ENCODE measurements at regions of chr19 and their contacts with region 1.

Region 1: DNA sequence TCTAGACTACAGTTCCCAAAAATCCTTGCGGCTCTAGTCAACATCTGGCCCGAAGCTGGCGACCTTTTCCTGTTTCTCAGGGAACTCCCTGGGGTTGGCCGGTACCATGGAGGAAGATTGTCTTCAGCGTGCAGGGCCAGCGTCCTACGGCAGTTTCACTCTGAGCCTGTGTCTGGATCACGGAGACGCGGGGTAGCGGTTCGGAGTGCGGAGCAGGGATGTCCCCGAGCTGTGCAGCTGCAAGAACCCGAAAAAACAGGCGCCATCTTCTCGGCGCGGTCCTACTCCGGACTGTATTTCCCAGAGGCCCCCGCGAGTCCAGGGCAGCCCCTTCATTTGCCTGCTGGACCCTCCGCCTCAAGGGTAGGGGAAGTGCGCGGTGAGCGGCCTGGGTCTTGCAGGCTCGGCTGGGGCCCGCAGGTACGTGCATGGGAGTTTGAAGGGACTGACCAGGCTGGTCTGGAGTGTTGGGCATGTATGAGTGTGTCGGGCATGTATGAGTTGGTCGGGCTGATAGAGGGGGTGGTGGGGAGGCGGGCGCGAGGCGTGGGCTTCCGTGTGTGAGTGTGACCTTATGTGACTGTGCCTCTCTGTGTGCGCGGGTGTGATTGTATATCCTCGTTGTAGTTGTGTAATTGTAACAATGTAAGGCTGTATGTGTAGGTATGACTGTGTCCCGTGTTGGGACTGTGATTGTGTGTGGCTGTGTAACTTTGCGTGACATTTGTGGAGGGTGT is at the start of gene ZNF383:
- DNase-seq: peak; percentile 80
- H3K4me3 Mint-ChIP-seq: peak within 1 kb of the TSS; percentile 96
- H3K27ac Mint-ChIP-seq: peak within 1 kb of the TSS; percentile 91
- H3K4me1 Mint-ChIP-seq: peaks cover 11% of the 10 kb centered on the region
- H3K27me3 Mint-ChIP-seq: no peaks in the 10 kb centered on the region
- total RNA-seq, gene ZNF383: 5.2 and 7.4 TPM in 2 replicates

Region 2: GRCh38 chr19:36528194-36528920 is 689.7 kb before region 1 on chr19 and contains the start of gene ZNF260:
- intact Hi-C with region 1: loop called (anchors 1 kb)
- DNase-seq: peak; percentile 87
- H3K4me3 Mint-ChIP-seq: peak within 1 kb of the TSS; percentile 96
- H3K27ac Mint-ChIP-seq: peak within 1 kb of the TSS; percentile 94
- H3K4me1 Mint-ChIP-seq: peaks cover 17% of the 10 kb centered on the region
- H3K27me3 Mint-ChIP-seq: no peaks in the 10 kb centered on the region
- total RNA-seq, gene ZNF260: 6.2 and 7.1 TPM in 2 replicates

Region 3: DNA sequence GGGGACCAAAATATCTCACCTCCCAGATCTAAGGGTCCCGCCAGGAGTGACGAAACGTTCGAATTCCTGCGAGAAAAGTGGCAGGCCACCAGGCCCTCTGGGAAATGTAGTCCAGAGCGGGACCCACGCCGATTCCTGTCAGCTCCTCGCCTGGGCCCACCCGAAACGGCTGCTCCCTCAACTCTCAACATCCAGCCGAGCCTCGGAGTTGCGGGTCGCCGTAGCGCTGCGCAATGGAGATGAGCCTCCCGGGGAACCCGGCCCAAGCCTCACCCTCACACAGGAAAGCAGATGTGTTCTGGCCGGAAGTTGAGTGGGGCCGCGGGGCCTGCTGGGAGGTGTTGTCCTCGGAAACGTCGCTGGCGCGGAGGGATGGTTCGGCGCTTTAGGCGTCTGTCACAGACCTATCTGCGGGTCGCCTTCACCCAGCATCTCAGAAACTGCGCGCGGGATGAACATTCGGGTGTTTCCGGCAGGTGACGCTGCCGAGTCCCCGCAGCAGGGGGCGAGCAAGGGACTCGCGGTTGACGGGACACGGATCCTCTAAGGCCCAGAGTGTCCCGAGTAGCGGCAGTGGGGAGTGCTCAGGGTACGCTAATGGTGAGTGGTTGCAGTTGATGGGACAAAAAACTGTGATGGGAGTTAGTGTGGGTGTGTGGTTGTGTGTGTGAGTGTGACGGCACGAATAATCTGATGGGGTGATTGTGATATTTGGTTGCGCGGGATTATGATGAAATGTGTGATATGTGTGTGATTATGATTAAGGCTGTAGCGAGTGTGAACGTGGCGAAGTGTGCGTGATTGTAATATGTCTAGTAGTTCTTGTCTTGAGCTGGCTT is 301.8 kb before region 1 on chr19 and contains the starts of genes ZNF568 and ZNF829:
- intact Hi-C with region 1: loop called (anchors 1 kb)
- DNase-seq: peak; percentile 92
- H3K4me3 Mint-ChIP-seq: peak within 1 kb of the TSS; percentile 90
- H3K27ac Mint-ChIP-seq: peak within 1 kb of the TSS; percentile 93
- H3K4me1 Mint-ChIP-seq: peaks cover 20% of the 10 kb centered on the region
- H3K27me3 Mint-ChIP-seq: no peaks in the 10 kb centered on the region
- total RNA-seq, gene ZNF568: 4.5 and 6.3 TPM in 2 replicates
- total RNA-seq, gene ZNF829: 3.4 and 3.5 TPM in 2 replicates

Region 4: DNA sequence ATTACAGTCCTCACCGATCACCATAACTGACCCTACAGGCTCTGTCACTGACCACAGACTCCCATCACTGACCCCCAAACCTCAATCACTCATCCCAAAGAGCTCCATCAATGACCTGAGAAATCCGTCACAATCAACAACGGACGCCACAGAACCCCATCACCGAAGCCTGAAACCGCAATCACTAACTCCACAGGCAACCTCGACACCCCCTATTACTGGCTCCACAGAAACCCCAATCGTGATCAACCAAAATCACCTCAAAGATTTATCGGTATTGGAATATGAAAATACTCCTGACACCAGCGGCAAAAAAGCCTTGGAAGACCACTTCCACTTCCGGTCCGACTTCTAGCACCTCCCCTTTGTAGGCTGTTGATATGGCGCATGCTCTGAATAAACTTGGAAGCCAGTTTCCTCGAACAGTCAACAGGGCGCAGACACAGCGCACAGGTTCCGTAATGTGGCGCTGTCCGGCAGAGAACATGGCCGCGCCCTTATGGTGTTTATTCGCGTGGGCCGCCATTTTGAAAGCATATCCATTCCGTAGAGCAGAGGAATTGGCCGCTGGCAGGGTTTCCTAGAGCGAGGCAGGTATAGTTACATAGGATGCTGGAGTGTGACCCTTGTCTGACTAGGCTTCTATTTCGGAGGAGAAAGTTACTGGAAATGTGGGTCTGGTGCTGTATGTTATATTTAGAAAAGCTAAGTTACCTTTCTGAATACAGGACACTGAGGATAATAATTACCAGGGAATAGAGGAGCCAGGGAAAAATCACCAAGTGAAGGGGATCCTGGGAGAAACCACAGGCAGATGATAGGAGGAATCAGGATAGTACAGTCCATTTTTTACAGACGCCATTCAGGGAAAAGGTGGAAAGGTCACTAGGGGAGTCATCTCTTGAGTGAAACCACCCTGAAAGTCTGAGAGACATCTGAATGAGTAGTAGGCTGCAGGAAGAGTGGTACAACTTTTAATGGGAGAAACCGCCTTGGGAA is 45.4 kb before region 1 on chr19 and contains the start of gene ZNF585A:
- intact Hi-C with region 1: loop called (anchors 1 kb)
- DNase-seq: peak; percentile 82
- H3K4me3 Mint-ChIP-seq: no peak within 1 kb of the TSS
- H3K27ac Mint-ChIP-seq: no peak within 1 kb of the TSS
- H3K4me1 Mint-ChIP-seq: no peaks in the 10 kb centered on the region
- H3K27me3 Mint-ChIP-seq: no peaks in the 10 kb centered on the region
- total RNA-seq, gene ZNF585A: 4.1 and 4.2 TPM in 2 replicates

Region 5: GRCh38 chr19:37413243-37414084 is 195.4 kb after region 1 on chr19:
- intact Hi-C with region 1: no loop called
- DNase-seq: no peak
- H3K4me3 Mint-ChIP-seq: no peak overlapping the region
- H3K27ac Mint-ChIP-seq: no peak overlapping the region
- H3K4me1 Mint-ChIP-seq: no peaks in the 10 kb centered on the region
- H3K27me3 Mint-ChIP-seq: no peaks in the 10 kb centered on the region

Region 6: DNA sequence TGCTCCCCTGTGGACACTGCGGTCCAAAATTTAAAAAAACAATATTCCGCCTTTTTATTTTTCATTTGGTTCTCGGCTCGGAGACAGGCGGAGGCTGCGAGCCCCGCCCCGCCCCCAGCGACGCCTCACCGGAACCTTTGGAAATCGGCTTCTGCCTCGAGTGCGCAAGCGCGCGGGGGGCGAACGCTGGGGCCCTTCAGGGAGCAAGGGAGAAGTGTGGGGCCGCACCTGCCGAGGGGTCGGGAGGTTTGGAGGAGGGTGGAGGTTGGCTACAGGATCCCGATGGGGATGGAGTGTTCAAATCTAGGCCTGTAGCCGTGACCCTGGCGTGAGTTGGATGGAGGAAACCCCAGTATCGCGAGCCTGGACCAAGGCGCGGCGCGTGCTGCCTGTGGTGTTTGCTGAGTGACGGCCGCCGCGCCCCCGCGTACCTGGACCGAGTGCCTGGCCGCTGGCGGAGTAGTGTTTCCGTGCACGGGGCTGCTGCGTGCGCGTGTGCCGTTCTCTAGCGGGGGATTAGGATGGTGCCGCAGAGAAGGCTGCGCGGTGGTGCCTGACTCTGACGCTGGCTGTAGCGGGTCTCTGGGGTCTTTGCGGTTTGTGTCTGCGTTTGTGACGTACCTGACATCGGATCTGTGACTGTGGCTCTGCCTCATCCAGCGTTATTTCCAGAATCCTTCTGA is 437.8 kb after region 1 on chr19:
- intact Hi-C with region 1: loop called (anchors 2 kb)
- DNase-seq: peak; percentile 85
- H3K4me3 Mint-ChIP-seq: peak overlapping the region; percentile 83
- H3K27ac Mint-ChIP-seq: peak overlapping the region; percentile 93
- H3K4me1 Mint-ChIP-seq: peaks cover 22% of the 10 kb centered on the region
- H3K27me3 Mint-ChIP-seq: no peaks in the 10 kb centered on the region

Measured in activated T-helper 2 cell treated with anti-CD3 and anti-CD28 coated beads, Interferon-gamma antibody, Interleukin-2, Interleukin-4, amounts not matched to agents 10 μg/mL and 5 μg/mL and 100 μg/mL, durations not matched to agents 14 hours and 24 hours and 36 hours (primary cell).